Activated naive CD4-positive, alpha-beta T cell treated with anti-CD3 and anti-CD28 coated beads for 36 hours (primary cell): ENCODE measurements at regions of chr5 and their contacts with region 1.

Region 1: GRCh38 chr5:115487756-115488155 is 56.8 kb downstream of the FEM1C start:
- DNase-seq: peak; percentile 53
- H3K4me3 Mint-ChIP-seq: no peak overlapping the region
- H3K27ac Mint-ChIP-seq: peak overlapping the region; percentile 64
- H3K4me1 Mint-ChIP-seq: peaks cover 44% of the 10 kb centered on the region
- H3K27me3 Mint-ChIP-seq: peaks cover 8% of the 10 kb centered on the region

Region 2: GRCh38 chr5:115377468-115378217 is 110.1 kb before region 1 on chr5:
- CTCF ChIA-PET with region 1: no interaction called
- intact Hi-C with region 1: loop called (anchors 1 kb)
- DNase-seq: no peak
- H3K4me3 Mint-ChIP-seq: no peak overlapping the region
- H3K27ac Mint-ChIP-seq: no peak overlapping the region
- H3K4me1 Mint-ChIP-seq: peaks cover 6% of the 10 kb centered on the region
- H3K27me3 Mint-ChIP-seq: no peaks in the 10 kb centered on the region

Region 3: GRCh38 chr5:115522832-115523403 is 35.2 kb after region 1 on chr5:
- CTCF ChIA-PET with region 1: no interaction called
- intact Hi-C with region 1: loop called (anchors 1 kb)
- DNase-seq: no peak
- H3K4me3 Mint-ChIP-seq: peak overlapping the region; percentile 11
- H3K27ac Mint-ChIP-seq: peak overlapping the region; percentile 64
- H3K4me1 Mint-ChIP-seq: peaks cover 36% of the 10 kb centered on the region
- H3K27me3 Mint-ChIP-seq: no peaks in the 10 kb centered on the region

Region 4: GRCh38 chr5:115601701-115602590 is 114.2 kb after region 1 on chr5 and contains the start of gene TICAM2:
- CTCF ChIA-PET with region 1: no interaction called
- intact Hi-C with region 1: loop called (anchors 1 kb)
- DNase-seq: peak; percentile 76
- H3K4me3 Mint-ChIP-seq: peak within 1 kb of the TSS; percentile 59
- H3K27ac Mint-ChIP-seq: no peak within 1 kb of the TSS
- H3K4me1 Mint-ChIP-seq: peaks cover 39% of the 10 kb centered on the region
- H3K27me3 Mint-ChIP-seq: no peaks in the 10 kb centered on the region
- total RNA-seq, gene TICAM2: 0.72 to 0.91 TPM